Uterus (tissue), 4 donors: ENCODE measurements at regions of chr17 and their contacts with region 1.

Region 1: GRCh38 chr17:3012926-3013581 is 50.4 kb downstream of the OR1D5 start:
- DNase-seq: peak; percentile 56 to 58
- H3K4me3 ChIP-seq: no peak overlapping the region
- H3K27ac ChIP-seq: no peak overlapping the region
- H3K4me1 ChIP-seq: no peaks in the 10 kb centered on the region
- H3K27me3 ChIP-seq: no peaks in the 10 kb centered on the region
- CTCF ChIP-seq: peak; percentile 69 to 93 (median 86)
- POLR2A ChIP-seq: no peak

Region 2: DNA sequence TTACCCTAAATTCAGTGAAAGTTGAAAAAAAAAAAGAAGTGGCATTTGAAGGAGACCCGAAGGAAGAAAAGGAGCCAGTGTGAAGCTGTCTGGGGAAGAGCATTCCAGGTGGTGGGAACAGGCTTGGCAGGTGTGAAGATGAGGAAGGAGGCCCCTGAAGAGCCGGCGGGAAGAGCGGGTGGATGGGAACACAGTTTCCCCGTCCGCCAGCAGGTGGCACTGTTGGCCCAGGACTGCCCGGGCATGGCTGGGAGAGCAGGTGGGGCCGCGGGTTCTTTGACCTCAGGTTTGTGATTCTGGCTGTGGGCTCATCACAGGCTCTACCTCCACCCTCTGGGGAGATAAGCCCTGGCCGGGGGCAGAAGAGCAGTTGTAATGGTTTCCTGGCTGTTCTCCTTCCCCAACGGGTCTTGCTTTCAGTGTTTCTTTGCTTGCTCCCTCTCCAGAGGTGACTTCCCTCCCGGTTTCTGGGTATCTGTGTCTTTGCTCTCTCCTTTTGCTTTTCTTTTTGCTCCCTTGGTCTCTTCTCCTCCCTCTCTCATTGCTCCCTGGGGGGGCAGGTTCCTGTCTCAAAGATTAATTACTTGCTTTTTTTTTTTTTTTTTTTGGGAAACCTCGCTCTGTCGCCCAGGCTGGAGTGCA is 184.5 kb before region 1 on chr17:
- intact Hi-C with region 1: loop called (anchors 5 kb)
- DNase-seq: peak; percentile 36 to 59
- H3K4me3 ChIP-seq: no peak overlapping the region
- H3K27ac ChIP-seq: no peak overlapping the region
- H3K4me1 ChIP-seq: no peaks in the 10 kb centered on the region
- H3K27me3 ChIP-seq: no peaks in the 10 kb centered on the region
- CTCF ChIP-seq: peak; percentile 83 to 91 (median 86)
- POLR2A ChIP-seq: no peak

Region 3: DNA sequence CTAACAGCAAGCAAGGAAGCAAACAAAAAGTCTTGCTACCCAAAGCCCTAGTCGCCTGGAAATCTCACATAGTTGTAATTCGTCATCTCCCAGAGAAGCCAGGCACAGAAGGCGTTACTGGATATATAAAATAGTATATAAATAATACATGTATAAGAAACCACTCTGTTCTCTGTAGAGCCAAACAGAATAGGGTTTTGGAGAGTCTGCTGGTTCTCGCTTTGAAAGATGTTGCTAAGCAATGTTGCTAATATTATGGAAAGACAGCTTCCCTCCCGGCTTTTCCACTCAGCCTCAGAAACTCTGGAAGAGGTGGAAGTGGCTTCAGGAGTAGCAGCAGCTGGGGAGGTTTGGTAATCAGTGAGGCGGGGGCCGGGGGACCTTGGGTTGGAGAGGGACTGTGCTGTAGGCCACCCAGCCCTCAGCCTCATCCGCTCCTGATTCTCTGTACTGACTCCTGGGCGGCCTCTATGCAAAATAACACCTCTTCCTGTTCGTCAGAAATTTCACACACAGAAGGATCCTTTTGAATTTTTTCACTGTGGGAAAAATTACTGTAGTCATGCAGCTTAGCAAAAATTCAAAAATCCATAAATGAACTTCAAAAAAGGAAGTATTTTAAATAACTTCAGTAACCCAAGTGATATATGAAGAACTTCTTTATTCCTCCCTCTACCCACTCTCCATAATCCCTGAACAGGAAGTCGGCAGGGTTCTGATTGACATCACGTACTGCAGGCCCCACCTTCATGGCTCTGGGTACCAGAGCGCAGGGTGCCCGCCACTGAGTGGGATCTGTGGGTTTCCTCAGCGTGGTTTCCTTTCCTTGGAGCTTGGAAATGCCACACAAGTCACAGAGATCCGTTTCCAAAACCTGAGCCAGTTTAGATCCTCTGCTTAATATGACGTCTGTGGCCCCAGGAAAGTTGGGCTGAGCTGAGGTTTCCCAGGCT is 165.4 kb before region 1 on chr17:
- intact Hi-C with region 1: loop called (anchors 5 kb)
- DNase-seq: no peak
- H3K4me3 ChIP-seq: no peak overlapping the region
- H3K27ac ChIP-seq: no peak overlapping the region
- H3K4me1 ChIP-seq: no peaks in the 10 kb centered on the region
- H3K27me3 ChIP-seq: no peaks in the 10 kb centered on the region
- CTCF ChIP-seq: no peak
- POLR2A ChIP-seq: no peak